ENCODE measurements at regions of chr18 and their contacts with region 1.

Region 1: DNA sequence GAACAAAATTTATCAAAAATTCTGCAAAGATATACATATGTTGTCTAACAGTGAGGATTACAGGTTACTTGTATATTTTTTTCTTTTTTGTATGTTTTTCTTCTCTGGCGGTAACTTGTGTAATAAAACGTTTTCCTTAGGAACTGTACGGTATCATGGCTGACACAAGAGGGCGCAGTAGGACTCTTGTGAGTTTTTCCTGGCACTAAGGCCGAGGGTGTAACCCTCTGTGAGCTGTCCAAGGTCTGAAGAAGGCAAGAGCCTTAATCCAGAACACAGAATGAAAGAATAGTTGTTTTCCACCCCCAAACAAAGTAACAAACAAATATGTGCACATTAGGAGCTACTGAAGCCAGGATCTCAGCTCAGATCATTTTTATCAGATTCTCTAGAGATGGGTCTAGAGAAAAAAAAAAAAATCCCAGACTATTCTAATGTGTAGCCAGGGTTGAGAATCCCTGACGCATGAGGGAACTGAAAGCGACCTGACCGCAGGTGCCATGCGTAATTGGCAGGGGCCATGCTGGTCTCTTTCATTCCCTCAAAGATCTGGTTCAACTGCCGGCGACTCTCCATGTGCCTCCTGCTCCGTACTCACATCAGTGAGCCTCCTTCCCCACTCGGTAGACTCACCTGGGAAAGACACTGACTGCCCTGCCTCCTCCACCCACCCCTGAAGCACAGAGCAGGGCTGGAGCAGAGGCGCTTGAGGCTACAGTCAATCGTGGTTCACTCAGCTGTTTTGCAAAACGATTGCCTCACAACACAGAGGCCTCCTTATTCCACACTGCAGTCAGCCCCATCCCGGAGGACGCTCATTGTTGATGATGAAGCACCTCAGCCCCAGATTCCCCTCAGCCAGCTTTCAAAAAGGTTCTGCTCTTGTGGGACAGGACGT is 26.9 kb downstream of the TMEM200C start:
- DNase-seq: peak; percentile 70
- H3K4me3 Mint-ChIP-seq: no peak overlapping the region
- H3K27ac Mint-ChIP-seq: no peak overlapping the region
- H3K4me1 Mint-ChIP-seq: no peaks in the 10 kb centered on the region
- H3K27me3 Mint-ChIP-seq: peaks cover 7% of the 10 kb centered on the region

Region 2: DNA sequence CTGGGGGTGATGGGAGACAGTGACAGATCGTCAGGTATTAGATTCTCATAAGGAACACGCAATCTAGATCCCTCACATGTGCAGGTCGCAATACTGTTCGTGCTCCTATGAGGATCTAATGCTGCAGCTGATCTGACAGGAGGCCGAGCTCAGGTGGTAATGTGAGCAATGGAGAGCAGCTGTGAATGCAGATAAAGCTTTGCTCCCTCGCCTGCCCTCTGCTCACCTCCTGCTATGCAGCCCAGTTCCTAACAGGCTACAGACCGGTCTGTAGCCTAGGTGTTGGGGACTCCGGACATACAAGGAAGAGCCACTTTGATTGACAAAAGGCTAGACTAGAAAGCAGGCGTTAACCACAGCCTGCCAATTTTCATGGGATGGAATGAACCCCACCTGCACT is 210.4 kb after region 1 on chr18:
- CTCF ChIA-PET with region 1: no interaction called
- intact Hi-C with region 1: no loop called
- DNase-seq: no peak
- H3K4me3 Mint-ChIP-seq: no peak overlapping the region
- H3K27ac Mint-ChIP-seq: no peak overlapping the region
- H3K4me1 Mint-ChIP-seq: no peaks in the 10 kb centered on the region
- H3K27me3 Mint-ChIP-seq: no peaks in the 10 kb centered on the region

Region 3: GRCh38 chr18:6482198-6482977 is 613.9 kb after region 1 on chr18:
- CTCF ChIA-PET with region 1: no interaction called
- intact Hi-C with region 1: loop called (anchors 5 kb)
- DNase-seq: no peak
- H3K4me3 Mint-ChIP-seq: no peak overlapping the region
- H3K27ac Mint-ChIP-seq: no peak overlapping the region
- H3K4me1 Mint-ChIP-seq: no peaks in the 10 kb centered on the region
- H3K27me3 Mint-ChIP-seq: no peaks in the 10 kb centered on the region

Measured in activated naive CD4-positive, alpha-beta T cell treated with anti-CD3 and anti-CD28 coated beads for 36 hours (primary cell).